ENCODE measurements at regions of chr15 and their contacts with region 1.

Region 1: DNA sequence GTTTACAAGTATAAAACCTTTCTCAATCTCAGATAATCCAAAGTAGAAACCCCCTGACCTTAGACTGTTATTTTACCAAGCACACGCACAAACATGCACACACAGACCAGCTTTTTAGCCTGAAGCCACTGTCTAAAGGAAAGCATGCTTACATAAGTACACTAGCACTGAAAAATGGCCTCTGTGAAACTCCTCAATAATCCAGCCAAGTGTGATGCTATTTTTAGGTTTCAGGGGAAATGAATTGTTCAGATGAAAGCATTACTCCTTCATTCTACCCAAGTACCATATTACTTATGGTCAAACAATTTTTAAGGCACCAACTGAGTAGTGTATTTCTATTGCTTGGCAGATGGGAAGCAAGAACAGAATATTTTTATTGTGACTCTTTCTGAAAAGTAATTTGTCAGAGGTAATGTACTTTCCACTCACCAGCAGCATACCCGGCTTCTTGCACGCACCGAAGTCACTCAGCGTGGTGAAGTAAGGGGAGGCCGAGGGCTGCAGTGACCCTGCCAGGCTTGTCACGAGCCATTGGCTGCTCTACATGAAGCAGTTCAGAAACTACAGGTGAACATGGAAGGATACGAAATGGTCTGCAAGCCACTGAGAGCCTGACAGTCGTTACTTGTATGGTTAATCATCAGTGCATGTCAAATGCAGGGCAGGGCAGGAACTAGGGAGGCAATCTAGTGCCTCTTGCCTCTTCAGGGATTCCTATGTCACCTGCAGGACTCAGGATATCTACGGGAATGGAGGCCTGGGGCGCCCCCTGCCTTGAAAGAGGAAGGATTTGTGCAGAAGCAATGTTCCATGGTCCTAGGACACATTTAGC is 106.7 kb downstream of the GABRB3 start:
- DNase-seq: no peak

Region 2: GRCh38 chr15:26590676-26591075 is 75.5 kb before region 1 on chr15:
- intact Hi-C with region 1: no loop called
- DNase-seq: peak in 1 of 10 donors; percentile 17

Region 3: GRCh38 chr15:26759986-26760385 is 93.8 kb after region 1 on chr15:
- intact Hi-C with region 1: no loop called
- DNase-seq: no peak

Region 4: GRCh38 chr15:26773069-26773877 is 107.1 kb after region 1 on chr15:
- intact Hi-C with region 1: loop called (anchors 10 kb)
- DNase-seq: peak; percentile 37 to 92 (median 73)

Measured in posterior cingulate gyrus (tissue), 11 donors.